WTC11 (cell line): ENCODE measurements at regions of chr20 and their contacts with region 1.

Region 1: DNA sequence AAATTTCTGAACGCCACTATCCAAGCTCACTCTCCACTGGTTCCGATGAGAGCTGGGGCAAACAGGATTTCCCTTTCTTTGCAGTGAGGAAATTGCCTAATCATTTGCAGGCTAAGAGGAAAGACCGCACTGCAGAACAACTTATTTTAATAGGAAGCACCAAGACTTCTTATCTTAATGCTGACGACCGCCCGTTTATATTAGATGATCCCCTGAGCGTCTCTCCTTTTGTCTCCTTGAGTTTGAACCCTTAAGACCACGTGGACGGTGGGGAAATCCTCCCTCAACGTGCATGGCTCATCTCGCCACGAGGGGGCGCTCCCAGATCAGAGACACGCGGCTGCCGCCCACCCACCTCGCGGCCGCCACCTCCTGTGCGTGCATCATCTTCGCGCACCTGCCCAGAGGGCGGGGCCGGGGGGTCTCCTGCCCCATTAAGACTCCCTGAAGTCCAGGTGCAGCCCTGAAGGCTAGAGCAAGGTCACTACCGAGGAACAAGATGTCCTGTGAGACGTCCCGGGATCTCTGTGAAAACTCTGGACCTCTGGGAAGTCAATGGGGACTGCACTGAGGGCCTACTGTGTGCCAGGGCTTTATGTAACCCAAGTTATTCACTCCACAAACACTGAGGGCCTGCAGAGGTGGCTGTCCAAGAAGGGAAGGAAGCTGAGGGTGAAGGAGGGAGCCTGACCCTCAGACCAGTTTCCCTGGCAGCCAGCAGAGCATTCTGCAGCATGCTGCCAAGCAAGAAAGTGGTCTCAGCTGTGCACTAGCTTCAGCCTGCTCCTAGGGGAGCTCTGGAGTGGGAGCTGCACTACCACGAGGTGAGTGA is 28.1 kb downstream of the PDYN start:
- DNase-seq: peak; percentile 89
- ATAC-seq: peak; percentile 70
- H3K4me3 Mint-ChIP-seq: peak overlapping the region; percentile 58
- H3K27ac Mint-ChIP-seq: no peak overlapping the region
- H3K4me1 Mint-ChIP-seq: peaks cover 36% of the 10 kb centered on the region
- H3K27me3 Mint-ChIP-seq: peaks cover 22% of the 10 kb centered on the region
- CTCF ChIP-seq: peak; percentile 89

Region 2: DNA sequence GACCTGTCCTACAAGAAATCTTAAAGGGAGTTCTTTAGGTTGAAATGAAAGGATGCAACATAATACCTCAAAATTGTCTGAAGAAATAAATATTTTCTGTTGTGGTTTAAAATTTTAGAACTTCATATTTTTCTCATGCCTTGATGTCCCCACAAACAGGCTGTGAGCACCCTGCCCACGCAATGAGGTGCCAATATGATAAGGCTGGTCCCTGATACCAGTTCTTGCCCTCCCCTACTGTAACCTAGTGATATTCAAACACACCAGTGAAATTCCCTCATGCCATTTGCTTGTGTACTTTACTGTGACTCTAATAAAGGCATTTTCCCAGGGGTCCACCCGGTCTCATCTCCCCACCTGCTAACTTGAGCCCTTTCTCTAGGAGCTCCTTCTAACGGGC is 240.8 kb before region 1 on chr20:
- CTCF ChIA-PET with region 1: no interaction called
- POLR2A ChIA-PET with region 1: no interaction called
- DNase-seq: no peak
- ATAC-seq: no peak
- H3K4me3 Mint-ChIP-seq: no peak overlapping the region
- H3K27ac Mint-ChIP-seq: no peak overlapping the region
- H3K4me1 Mint-ChIP-seq: peaks cover 24% of the 10 kb centered on the region
- H3K27me3 Mint-ChIP-seq: peaks cover 67% of the 10 kb centered on the region
- CTCF ChIP-seq: no peak

Region 3: DNA sequence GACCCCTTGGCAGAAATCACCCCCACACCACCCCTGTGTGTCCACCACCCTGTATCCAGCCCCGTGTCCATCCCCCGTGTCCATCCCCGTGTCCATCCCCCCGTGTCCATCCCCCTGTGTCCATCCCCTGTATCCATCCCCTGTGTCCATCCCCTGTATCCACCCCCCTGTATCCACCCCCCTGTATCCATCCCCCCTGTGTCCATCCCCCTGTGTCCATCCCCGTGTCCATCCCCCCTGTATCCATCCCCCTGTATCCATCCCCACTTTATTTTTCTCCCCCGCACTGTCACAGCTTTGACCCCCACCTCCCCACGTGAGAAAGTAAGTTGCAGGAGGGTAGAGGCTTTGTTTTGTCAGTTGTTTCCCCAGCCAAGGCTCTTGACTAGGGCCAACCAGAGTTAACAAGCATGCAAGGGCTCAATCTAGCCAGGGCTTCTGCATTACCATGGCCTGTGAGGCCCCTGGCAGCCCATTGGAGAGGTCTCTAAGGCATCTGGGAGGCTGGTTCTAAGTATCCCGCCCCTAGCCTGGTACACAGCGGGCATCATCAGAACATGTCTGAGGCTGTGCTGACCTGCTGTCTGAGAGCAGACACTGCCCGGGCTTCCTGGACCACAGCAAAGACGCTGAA is 88.6 kb before region 1 on chr20:
- CTCF ChIA-PET with region 1: no interaction called
- POLR2A ChIA-PET with region 1: no interaction called
- DNase-seq: no peak
- ATAC-seq: no peak
- H3K4me3 Mint-ChIP-seq: no peak overlapping the region
- H3K27ac Mint-ChIP-seq: no peak overlapping the region
- H3K4me1 Mint-ChIP-seq: peaks cover 18% of the 10 kb centered on the region
- H3K27me3 Mint-ChIP-seq: peaks cover 5% of the 10 kb centered on the region; the same call in 1 of the 2 replicates
- CTCF ChIP-seq: no peak

Region 4: DNA sequence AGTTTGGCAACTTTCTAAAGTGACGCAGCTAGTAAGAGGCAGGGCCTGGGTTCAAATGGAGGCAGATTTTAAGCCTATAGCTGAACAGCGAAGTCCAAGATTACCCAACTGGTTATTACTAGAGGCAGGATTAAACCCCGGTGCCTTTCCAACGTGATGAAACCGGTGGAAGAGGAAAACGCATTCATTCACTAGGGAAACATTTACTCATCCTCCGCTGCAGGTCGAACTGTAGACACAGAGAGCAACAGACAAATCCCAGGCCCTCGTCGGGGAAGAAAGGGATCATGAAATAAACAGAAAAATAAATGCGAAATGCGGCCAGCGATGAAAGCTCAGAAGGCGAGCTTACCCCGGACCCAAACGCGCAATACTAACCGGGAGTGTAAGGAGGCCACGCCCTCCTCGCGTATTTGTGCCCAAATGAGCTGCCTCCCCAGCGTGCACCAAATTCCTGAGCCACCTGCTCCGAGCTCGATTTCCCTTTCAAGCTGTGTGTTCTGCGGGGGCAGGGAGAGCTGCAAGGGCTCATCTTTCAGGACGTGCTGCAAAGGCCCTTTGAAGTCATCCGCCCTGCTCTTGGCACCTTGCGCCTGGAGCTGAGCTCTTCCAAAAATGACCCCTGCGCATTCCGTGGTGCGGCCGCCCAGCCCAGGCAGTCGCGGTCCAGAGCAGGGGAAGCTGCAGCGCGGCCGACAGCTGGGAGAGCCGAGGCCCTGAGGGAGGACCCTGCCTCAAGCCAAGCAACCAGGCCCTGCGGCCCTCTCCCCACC is 18.8 kb before region 1 on chr20:
- CTCF ChIA-PET with region 1: interaction called, 30 read pairs
- POLR2A ChIA-PET with region 1: interaction called, 7 read pairs
- DNase-seq: peak; percentile 90
- ATAC-seq: peak; percentile 81
- H3K4me3 Mint-ChIP-seq: peak overlapping the region; percentile 72
- H3K27ac Mint-ChIP-seq: peak overlapping the region; percentile 75
- H3K4me1 Mint-ChIP-seq: peaks cover 64% of the 10 kb centered on the region
- H3K27me3 Mint-ChIP-seq: peaks cover 42% of the 10 kb centered on the region
- CTCF ChIP-seq: no peak

Region 5: DNA sequence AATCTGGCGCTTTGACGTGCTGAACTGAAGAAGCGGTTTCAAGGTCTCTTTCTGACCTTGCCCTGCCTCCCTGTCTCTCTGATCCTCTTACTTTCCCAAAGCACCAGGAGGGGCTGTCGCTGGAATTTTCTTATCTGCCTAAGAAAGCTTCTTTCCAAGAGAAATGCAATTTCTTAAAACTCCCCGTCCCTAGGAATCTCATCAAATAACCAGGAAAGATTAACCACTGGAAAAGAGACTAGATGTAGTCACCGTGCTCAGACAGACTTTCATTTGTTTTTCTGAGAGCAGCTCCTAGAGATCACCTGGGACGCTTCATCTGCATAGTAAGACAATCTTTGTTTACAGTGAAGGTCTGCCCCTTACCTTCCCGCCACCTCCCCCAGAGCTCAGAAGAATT is 10.5 kb before region 1 on chr20:
- CTCF ChIA-PET with region 1: interaction called, 32 read pairs
- POLR2A ChIA-PET with region 1: no interaction called
- DNase-seq: no peak
- ATAC-seq: peak; percentile 87
- H3K4me3 Mint-ChIP-seq: peak overlapping the region; percentile 57
- H3K27ac Mint-ChIP-seq: peak overlapping the region; percentile 99
- H3K4me1 Mint-ChIP-seq: peaks cover 49% of the 10 kb centered on the region
- H3K27me3 Mint-ChIP-seq: no peaks in the 10 kb centered on the region
- CTCF ChIP-seq: no peak

Region 6: DNA sequence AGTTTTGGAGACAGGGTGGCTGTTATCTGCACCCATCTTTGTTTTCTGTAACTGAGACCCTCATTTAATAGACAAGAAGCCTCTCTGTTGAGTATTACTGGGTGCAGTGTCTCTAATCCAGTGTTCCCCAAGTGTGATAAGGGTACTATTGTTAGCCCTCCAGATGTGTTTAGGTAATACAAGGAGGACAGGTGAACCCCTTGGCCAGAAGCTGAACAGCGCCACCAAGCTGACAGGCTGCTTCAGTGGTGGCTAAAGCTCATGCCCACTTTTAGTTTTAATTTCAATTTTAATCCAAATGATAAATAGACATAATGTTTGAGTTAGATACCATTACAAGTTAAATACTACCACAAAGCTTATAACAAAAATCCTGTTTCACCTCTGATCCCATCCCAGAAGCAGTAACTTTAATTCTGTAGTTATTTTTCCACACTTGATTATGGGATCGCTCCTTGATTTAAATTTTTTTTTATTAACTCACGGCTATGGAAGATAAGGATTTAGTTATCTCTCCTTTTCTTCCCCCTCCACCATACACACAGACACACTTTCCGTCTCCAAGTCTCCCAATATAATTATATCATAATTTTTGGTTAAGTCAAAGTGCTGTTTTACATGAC is 127.5 kb after region 1 on chr20:
- CTCF ChIA-PET with region 1: interaction called, 51 read pairs
- POLR2A ChIA-PET with region 1: no interaction called
- DNase-seq: peak; percentile 71
- ATAC-seq: peak; percentile 67
- H3K4me3 Mint-ChIP-seq: no peak overlapping the region
- H3K27ac Mint-ChIP-seq: no peak overlapping the region
- H3K4me1 Mint-ChIP-seq: peaks cover 16% of the 10 kb centered on the region
- H3K27me3 Mint-ChIP-seq: no peaks in the 10 kb centered on the region; the same call in 1 of the 2 replicates
- CTCF ChIP-seq: peak; percentile 47; the same call in 1 of the 2 replicates